ENCODE measurements at regions of chr12 and their contacts with region 1.

Region 1: GRCh38 chr12:32062881-32063280 is 43.8 kb upstream of the BICD1 start:
- DNase-seq: no peak
- CTCF ChIP-seq: no peak

Region 2: DNA sequence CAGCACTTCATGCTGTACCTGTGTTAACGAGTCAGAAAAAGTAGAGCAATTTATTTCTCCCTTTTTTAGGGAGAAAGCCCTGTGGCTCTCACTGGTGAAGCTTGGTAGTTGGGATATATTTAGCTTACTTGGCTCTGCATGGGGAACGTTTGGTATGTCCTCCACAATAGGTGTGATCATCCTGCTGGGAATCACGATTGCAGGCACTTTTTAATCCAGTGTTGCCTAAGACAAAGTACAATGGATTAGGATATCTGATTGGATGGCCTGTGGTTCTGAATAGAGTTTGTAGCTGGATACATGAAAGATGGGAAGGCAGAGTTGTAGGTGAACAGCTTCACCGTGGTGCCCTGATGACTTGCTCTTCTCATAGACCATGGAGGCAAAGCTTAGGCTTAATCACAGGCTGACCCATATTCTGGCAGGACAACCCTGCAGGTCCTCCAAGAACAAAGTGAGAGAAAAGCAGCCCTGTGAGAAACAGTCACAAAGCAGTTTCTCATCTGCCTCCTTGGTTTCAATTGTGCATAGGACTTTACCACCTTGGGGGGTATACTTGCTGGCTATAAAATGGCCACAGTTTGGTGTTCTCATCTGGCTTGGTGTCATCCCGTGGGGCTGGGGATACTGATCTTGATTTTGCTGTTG is 96.2 kb before region 1 on chr12:
- CTCF ChIA-PET with region 1: no interaction called
- POLR2A ChIA-PET with region 1: no interaction called
- DNase-seq: no peak
- CTCF ChIP-seq: no peak

Region 3: DNA sequence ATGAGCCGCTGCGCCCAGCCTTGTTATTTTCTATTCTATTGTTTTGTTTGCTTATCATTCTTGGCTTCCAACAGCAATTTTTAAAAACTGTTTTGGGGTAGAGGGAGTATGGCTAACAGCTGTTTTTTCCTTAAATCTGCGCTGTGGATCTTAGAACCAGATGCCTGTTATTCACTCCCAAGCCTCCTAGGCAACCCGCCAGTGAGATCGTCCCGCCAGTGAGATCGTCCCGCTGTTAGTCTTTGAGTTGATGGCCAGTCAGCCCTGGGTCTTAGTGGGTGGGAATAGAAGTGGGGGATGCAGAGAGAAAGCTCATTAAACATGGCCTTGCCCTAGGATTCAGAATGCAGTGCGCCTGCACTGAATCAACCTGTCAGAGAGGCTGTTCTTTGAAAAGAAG is 23.5 kb before region 1 on chr12:
- CTCF ChIA-PET with region 1: interaction called, 13 read pairs
- POLR2A ChIA-PET with region 1: no interaction called
- DNase-seq: no peak
- CTCF ChIP-seq: no peak

Region 4: DNA sequence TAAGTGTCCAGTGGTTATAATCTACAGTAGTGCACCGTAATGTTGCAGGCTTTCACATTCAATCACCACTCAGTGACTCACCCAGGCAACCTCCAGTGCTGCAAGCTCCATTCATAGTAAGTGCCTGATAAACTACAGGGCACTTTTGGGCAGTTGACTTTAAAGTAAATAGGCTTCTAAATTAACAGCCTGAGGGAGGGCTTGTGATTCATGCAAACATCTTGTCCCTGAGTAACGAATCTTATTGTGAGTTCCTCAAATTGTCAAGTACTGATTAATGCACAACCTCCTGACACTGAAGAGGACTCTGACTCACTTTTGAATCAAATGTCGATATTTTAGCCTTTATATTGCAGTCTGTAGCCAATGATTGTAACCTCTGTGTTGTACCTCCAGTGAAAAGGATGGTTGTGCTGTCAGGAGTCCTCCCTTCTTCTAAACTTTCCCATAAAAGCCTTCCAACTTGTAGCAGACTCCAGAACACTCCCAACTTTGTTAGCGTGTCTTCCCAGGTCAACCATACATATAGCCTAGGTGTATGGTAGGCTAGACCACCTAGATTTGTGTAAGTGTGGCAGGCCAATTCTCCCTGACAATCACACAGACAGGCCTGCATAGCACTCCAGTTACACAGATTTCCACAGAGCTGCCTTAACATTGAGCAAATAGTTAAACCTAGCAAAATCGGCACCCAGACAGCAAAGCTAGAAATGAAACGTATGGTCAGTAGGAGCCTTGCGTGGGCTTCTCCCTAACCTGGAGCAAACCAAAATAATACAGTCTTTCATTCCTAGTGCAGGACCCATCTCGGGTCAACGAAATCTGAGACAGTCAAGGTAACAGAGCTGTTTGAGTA is 11.1 kb before region 1 on chr12:
- CTCF ChIA-PET with region 1: interaction called, 17 read pairs
- POLR2A ChIA-PET with region 1: no interaction called
- DNase-seq: no peak
- CTCF ChIP-seq: no peak